Thyroid gland (tissue), 4 donors: ENCODE measurements at regions of chr3 and their contacts with region 1.

Region 1: GRCh38 chr3:112642912-112643506 is 2.1 kb upstream of the CCDC80 start:
- DNase-seq: peak; percentile 87 to 91
- H3K4me3 ChIP-seq: no peak overlapping the region
- H3K27ac ChIP-seq: peak overlapping the region in 1 of 3 donors; percentile 19
- H3K4me1 ChIP-seq: peaks cover 39 to 52% of the 10 kb centered on the region in 2 donors
- H3K27me3 ChIP-seq: no peaks in the 10 kb centered on the region
- CTCF ChIP-seq: peak; percentile 36 to 98 (median 86)
- POLR2A ChIP-seq: no peak

Region 2: DNA sequence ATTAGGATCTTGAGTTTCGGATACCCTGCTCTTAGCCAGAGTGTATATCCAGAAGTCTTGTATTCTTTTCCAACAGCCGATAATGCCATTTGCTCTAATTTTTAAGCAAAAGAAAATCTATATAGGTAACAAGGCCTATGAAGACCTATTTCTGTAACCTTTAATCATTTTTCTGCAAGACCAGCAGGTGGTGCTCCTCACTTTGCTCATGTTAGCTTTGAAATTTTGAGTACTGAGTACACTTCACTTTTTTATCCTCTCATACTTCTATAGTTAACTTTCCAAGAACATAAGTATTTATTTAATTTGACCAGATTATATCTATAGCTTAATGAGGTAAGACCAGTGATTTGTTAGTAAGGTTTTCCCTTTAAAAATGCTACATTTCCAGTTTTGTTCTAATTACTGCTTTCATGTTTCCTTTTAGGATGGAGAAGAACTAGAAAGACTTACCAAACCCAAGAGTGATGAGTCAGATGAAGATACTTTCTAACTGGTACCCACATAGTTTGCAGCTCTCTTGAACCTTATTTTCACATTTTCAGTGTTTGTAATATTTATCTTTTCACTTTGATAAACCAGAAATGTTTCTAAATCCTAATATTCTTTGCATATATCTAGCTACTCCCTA is 60.6 kb before region 1 on chr3:
- intact Hi-C with region 1: loop called (anchors 5 kb)
- DNase-seq: peak; percentile 15 to 49
- H3K4me3 ChIP-seq: no peak overlapping the region
- H3K27ac ChIP-seq: no peak overlapping the region
- H3K4me1 ChIP-seq: no peaks in the 10 kb centered on the region
- H3K27me3 ChIP-seq: no peaks in the 10 kb centered on the region
- CTCF ChIP-seq: peak; percentile 39 to 80 (median 62)
- POLR2A ChIP-seq: no peak

Region 3: GRCh38 chr3:112699436-112699978 is 56.5 kb after region 1 on chr3:
- intact Hi-C with region 1: loop called (anchors 5 kb)
- DNase-seq: peak; percentile 32 to 50
- H3K4me3 ChIP-seq: no peak overlapping the region
- H3K27ac ChIP-seq: no peak overlapping the region
- H3K4me1 ChIP-seq: peaks cover 0 to 3% of the 10 kb centered on the region in 2 donors
- H3K27me3 ChIP-seq: no peaks in the 10 kb centered on the region
- CTCF ChIP-seq: peak in 4 of 6 experiments; percentile 36 to 73 (median 54)
- POLR2A ChIP-seq: no peak

Region 4: GRCh38 chr3:112814266-112814665 is 171.3 kb after region 1 on chr3:
- intact Hi-C with region 1: loop called (anchors 5 kb)
- DNase-seq: no peak
- H3K4me3 ChIP-seq: no peak overlapping the region
- H3K27ac ChIP-seq: no peak overlapping the region
- H3K4me1 ChIP-seq: no peaks in the 10 kb centered on the region
- H3K27me3 ChIP-seq: no peaks in the 10 kb centered on the region
- CTCF ChIP-seq: peak; percentile 12 to 78 (median 44)
- POLR2A ChIP-seq: no peak